Activated CD8-positive, alpha-beta T cell treated with anti-CD3 and anti-CD28 coated beads for 36 hours (primary cell): ENCODE measurements at regions of chr2 and their contacts with region 1.

Region 1: DNA sequence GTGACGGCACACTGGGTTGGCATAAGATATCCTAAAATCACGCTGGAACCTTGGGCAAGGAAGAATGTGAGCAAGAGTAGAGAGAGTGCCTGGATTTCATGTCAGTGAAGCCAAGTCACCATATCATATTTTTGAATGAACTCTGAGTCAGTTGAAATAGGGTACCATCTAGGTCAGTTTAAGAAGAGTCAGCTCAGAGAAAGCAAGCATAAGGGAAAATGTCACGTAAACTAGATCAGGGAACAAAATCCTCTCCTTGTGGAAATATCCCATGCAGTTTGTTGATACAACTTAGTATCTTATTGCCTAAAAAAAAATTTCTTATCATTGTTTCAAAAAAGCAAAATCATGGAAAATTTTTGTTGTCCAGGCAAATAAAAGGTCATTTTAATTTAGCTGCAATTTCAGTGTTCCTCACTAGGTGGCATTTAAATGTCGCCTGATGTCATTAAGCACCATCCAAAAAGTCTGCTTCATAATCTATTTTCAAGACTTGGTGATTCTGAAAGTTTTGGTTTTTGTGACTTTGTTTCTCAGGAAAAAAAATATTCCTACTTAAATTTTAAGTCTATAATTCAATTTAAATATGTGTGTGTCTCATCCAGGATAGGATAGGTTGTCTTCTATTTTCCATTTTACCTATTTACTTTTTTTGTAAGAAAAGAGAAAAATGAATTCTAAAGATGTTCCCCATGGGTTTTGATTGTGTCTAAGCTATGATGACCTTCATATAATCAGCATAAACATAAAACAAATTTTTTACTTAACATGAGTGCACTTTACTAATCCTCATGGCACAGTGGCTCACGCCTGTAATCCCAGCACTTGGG is 19.6 kb downstream of the RSAD2 start:
- DNase-seq: no peak
- ATAC-seq: peak; percentile 72
- H3K4me3 Mint-ChIP-seq: no peak overlapping the region
- H3K27ac Mint-ChIP-seq: peak overlapping the region; percentile 4
- H3K4me1 Mint-ChIP-seq: peaks cover 7% of the 10 kb centered on the region
- H3K27me3 Mint-ChIP-seq: no peaks in the 10 kb centered on the region
- CTCF ChIP-seq: peak; percentile 89

Region 2: GRCh38 chr2:6872394-6872793 is 24.8 kb before region 1 on chr2:
- CTCF ChIA-PET with region 1: interaction called, 33 read pairs
- POLR2A ChIA-PET with region 1: interaction called, 3 read pairs
- intact Hi-C with region 1: no loop called
- DNase-seq: no peak
- ATAC-seq: no peak
- H3K4me3 Mint-ChIP-seq: no peak overlapping the region
- H3K27ac Mint-ChIP-seq: peak overlapping the region; percentile 32
- H3K4me1 Mint-ChIP-seq: peaks cover 40% of the 10 kb centered on the region
- H3K27me3 Mint-ChIP-seq: no peaks in the 10 kb centered on the region
- CTCF ChIP-seq: no peak

Region 3: GRCh38 chr2:6883448-6884122 is 13.6 kb before region 1 on chr2:
- CTCF ChIA-PET with region 1: interaction called, 33 read pairs
- POLR2A ChIA-PET with region 1: interaction called, 3 read pairs
- intact Hi-C with region 1: no loop called
- DNase-seq: no peak
- ATAC-seq: no peak
- H3K4me3 Mint-ChIP-seq: no peak overlapping the region
- H3K27ac Mint-ChIP-seq: no peak overlapping the region
- H3K4me1 Mint-ChIP-seq: peaks cover 28% of the 10 kb centered on the region
- H3K27me3 Mint-ChIP-seq: no peaks in the 10 kb centered on the region
- CTCF ChIP-seq: no peak

Region 4: GRCh38 chr2:6917071-6917760 is 20.1 kb after region 1 on chr2 and contains the start of gene RNF144A:
- CTCF ChIA-PET with region 1: interaction called, 80 read pairs
- POLR2A ChIA-PET with region 1: interaction called, 4 read pairs
- intact Hi-C with region 1: no loop called
- DNase-seq: peak; percentile 67
- ATAC-seq: peak; percentile 68
- H3K4me3 Mint-ChIP-seq: peak within 1 kb of the TSS; percentile 74
- H3K27ac Mint-ChIP-seq: peak within 1 kb of the TSS; percentile 86
- H3K4me1 Mint-ChIP-seq: peaks cover 66% of the 10 kb centered on the region
- H3K27me3 Mint-ChIP-seq: no peaks in the 10 kb centered on the region
- CTCF ChIP-seq: peak; percentile 53
- total RNA-seq, gene RNF144A: 32.6 to 36.5 TPM

Region 5: GRCh38 chr2:6929196-6929819 is 32.2 kb after region 1 on chr2:
- CTCF ChIA-PET with region 1: interaction called, 23 read pairs
- POLR2A ChIA-PET with region 1: no interaction called
- intact Hi-C with region 1: no loop called
- DNase-seq: no peak
- ATAC-seq: peak; percentile 27
- H3K4me3 Mint-ChIP-seq: no peak overlapping the region
- H3K27ac Mint-ChIP-seq: no peak overlapping the region
- H3K4me1 Mint-ChIP-seq: peaks cover 52% of the 10 kb centered on the region
- H3K27me3 Mint-ChIP-seq: no peaks in the 10 kb centered on the region
- CTCF ChIP-seq: no peak

Region 6: GRCh38 chr2:7023542-7023941 is 126.4 kb after region 1 on chr2:
- CTCF ChIA-PET with region 1: interaction called, 14 read pairs
- POLR2A ChIA-PET with region 1: interaction called, 4 read pairs
- intact Hi-C with region 1: no loop called
- DNase-seq: no peak
- ATAC-seq: no peak
- H3K4me3 Mint-ChIP-seq: no peak overlapping the region
- H3K27ac Mint-ChIP-seq: no peak overlapping the region
- H3K4me1 Mint-ChIP-seq: no peaks in the 10 kb centered on the region
- H3K27me3 Mint-ChIP-seq: no peaks in the 10 kb centered on the region
- CTCF ChIP-seq: no peak

Region 7: DNA sequence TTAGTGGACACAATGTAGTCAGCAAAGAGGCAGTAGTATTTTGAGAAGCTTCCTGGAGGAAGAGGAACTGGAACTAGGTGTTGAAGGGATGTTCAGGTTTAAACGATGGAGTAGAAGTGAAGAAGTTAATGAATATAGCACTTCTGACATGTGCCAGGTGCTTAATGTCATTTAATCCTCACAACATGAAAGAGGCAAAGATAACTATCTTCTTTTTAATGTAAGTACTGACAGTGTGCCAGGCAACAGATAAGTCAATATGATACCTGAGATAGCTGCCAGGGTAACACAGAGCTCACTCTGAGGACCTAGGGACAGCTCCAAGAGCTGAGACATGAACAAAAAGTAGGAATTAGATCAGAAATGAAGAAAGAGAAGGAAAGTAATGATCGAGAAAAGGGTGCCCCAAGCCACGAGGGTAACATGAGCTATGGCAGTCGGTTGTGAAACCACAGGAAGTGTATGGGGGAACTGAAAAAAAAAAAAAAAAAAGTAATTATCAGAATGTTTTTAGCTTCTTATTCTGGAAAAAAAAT is 160.8 kb after region 1 on chr2:
- CTCF ChIA-PET with region 1: interaction called, 11 read pairs
- POLR2A ChIA-PET with region 1: no interaction called
- intact Hi-C with region 1: no loop called
- DNase-seq: peak; percentile 22
- ATAC-seq: peak; percentile 49
- H3K4me3 Mint-ChIP-seq: no peak overlapping the region
- H3K27ac Mint-ChIP-seq: peak overlapping the region; percentile 79
- H3K4me1 Mint-ChIP-seq: peaks cover 16% of the 10 kb centered on the region
- H3K27me3 Mint-ChIP-seq: no peaks in the 10 kb centered on the region
- CTCF ChIP-seq: no peak

Region 8: DNA sequence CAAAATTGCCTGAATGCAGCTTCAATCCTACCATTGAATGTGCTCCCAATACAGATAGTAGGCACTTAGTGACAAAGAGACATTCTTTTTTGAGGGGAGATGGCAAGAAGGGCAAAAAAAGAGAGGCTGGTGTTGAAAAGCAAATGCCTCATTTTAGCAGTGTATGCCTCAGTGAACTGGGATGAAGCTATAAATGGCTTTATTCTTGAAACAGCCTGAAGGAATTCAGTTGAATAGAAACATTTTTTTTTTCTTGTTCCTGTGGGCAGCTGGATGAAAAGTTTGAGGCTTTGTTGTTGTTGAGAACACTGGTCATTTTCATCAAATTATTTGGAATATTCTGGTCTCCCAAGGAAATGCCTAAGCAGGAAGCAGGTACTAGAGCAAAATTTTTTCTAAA is 249.0 kb after region 1 on chr2:
- CTCF ChIA-PET with region 1: no interaction called
- POLR2A ChIA-PET with region 1: no interaction called
- intact Hi-C with region 1: no loop called
- DNase-seq: no peak
- ATAC-seq: no peak
- H3K4me3 Mint-ChIP-seq: no peak overlapping the region
- H3K27ac Mint-ChIP-seq: no peak overlapping the region
- H3K4me1 Mint-ChIP-seq: no peaks in the 10 kb centered on the region
- H3K27me3 Mint-ChIP-seq: no peaks in the 10 kb centered on the region
- CTCF ChIP-seq: no peak